ENCODE measurements at regions of chr11 and their contacts with region 1.

Region 1: DNA sequence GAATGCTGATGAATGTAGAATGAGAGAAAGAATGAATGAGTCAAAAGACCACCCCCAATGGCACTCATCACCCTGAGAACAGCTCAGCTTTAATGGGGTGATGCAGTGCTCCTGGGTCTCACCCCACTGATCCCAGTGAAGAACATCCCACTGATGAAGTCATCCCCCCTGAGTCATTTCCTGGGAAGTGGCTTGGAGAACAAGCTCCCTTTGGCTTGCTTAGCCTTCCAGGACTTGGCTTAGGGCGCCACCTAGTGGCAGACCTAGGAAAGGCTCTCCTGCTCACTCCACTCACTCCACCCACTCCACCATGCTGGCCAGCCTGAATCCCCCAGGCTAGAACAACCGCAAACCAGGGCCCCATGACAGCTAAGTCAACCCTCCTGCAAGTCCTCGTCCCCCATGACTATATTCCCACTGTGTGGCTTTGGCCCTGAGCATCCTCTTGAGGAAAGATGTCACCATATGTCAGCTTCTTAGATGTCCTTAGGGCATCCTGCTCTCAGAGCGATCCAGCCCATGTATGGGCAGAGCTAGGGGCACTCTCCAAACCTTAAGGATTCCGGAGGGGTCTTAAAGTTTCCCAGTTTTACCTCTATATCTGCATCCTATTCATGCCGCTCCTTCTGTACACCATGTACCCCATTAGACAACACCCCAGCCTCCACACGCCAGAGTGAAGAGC is 17.8 kb upstream of the TMPRSS13 start:
- DNase-seq: peak in 1 of 2 donors; percentile 91
- H3K4me3 ChIP-seq: no peak overlapping the region
- H3K27ac ChIP-seq: no peak overlapping the region
- H3K4me1 ChIP-seq: no peaks in the 10 kb centered on the region
- H3K27me3 ChIP-seq: no peaks in the 10 kb centered on the region
- CTCF ChIP-seq: peak; percentile 94 to 98 (median 95)
- POLR2A ChIP-seq: no peak

Region 2: DNA sequence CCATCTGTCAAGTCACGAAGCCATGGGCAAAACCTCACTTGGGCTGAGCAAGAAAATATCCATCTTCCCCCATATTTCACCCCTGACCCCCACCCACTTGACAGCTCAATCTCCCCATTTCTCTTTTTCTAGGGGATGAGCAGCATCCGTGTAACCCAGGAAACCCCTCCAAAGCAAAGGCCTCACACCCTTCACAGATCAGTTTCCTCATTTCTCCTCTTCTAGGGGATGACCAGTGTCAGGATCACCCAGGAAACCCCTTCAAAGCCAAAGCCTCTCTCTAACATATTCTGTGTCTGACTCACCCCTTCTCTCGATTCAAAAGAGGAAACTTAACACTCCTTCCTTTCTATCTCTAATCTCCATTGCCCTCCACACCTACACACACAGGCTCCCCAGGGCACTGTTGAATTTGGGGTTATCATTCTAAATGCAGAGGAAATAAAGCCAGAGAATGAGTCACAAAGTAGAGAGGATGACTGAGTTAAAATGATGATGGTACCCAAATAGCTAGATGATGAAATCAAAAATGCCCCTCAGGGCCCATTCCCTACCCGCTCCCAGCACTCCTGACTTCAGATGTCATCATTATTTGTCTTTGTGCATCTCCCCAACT is 1613.9 kb before region 1 on chr11:
- intact Hi-C with region 1: no loop called
- DNase-seq: peak in 1 of 2 donors; percentile 34
- H3K4me3 ChIP-seq: no peak overlapping the region
- H3K27ac ChIP-seq: no peak overlapping the region
- H3K4me1 ChIP-seq: no peaks in the 10 kb centered on the region
- H3K27me3 ChIP-seq: no peaks in the 10 kb centered on the region
- CTCF ChIP-seq: no peak
- POLR2A ChIP-seq: no peak

Region 3: GRCh38 chr11:117807482-117808327 is 139.3 kb before region 1 on chr11:
- intact Hi-C with region 1: loop called (anchors 5 kb)
- DNase-seq: no peak
- H3K4me3 ChIP-seq: no peak overlapping the region
- H3K27ac ChIP-seq: no peak overlapping the region
- H3K4me1 ChIP-seq: peaks cover 5% of the 10 kb centered on the region
- H3K27me3 ChIP-seq: no peaks in the 10 kb centered on the region
- CTCF ChIP-seq: peak; percentile 61 to 94 (median 74)
- POLR2A ChIP-seq: no peak

Region 4: GRCh38 chr11:117843666-117844484 is 103.1 kb before region 1 on chr11:
- intact Hi-C with region 1: loop called (anchors 2 kb)
- DNase-seq: peak; percentile 89 to 91
- H3K4me3 ChIP-seq: no peak overlapping the region
- H3K27ac ChIP-seq: no peak overlapping the region
- H3K4me1 ChIP-seq: no peaks in the 10 kb centered on the region
- H3K27me3 ChIP-seq: no peaks in the 10 kb centered on the region
- CTCF ChIP-seq: peak; percentile 97 to 99 (median 98)
- POLR2A ChIP-seq: no peak

Region 5: DNA sequence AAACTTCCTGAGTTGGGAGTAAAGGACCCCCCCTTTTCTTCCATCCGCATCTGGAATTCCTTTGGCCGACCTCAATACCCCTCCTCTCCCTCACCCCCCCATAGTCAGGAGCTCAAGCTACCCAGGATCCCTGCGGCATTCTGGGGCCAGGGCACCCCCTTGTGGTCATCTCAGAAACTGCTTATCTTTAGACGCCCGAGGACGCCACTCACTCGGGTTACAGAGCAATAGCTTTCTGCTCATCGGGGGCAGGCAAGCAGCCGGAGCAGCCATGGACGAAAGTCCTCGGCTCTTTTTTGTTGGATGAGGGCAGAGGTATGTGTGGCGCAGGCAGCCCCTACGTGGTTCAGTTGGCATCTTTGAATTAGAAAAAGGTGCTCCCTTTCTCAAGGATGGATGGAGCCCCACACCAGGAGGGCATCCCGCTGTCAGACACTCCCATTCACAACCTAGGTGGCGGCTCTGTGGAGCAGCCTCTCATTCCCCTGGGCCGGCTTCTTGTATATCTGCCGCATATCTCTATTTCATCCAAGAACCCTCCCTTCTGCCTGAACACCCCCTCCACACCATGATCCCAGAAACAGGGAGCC is 1391.4 kb after region 1 on chr11:
- intact Hi-C with region 1: no loop called
- DNase-seq: no peak
- H3K4me3 ChIP-seq: peak overlapping the region; percentile 20 to 57
- H3K27ac ChIP-seq: peak overlapping the region; percentile 96
- H3K4me1 ChIP-seq: peaks cover 58% of the 10 kb centered on the region
- H3K27me3 ChIP-seq: no peaks in the 10 kb centered on the region
- CTCF ChIP-seq: peak; percentile 57 to 85 (median 64)
- POLR2A ChIP-seq: no peak

Measured in vagina (tissue), 2 donors.